HCT116 (cell line): ENCODE measurements at regions of chr3 and their contacts with region 1.

Region 1: DNA sequence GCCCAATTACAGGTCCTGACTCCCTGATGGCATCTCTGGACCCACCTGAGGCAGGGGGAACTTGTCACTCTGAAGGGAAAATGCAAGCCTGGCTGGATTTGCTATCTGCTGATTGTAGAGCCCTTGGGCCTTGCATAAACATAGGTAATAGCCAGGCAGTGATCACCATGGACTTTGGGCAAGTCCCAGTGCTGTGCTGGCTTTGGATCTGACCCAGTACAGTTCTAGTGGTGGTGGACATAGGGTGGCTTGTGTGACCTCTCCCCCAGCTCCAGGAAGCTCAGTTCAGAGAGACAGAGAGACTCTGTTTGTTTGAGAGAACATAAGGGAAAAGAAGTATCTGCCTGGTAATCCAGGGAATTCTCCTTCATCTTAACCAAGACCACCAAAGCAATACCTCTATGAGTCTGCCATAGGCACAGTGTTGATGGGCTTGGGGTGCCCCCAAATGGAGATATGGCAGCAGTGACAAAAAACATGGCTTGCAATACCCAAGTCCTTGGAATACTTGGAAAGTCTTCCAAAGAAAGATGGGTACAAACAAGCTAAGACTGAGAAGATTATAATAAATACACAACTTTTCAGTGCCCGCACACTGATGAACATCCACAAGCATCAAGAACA is 348.5 kb downstream of the PYDC2 start:
- DNase-seq: no peak
- ATAC-seq: no peak
- H3K4me3 ChIP-seq: no peak overlapping the region
- H3K27ac ChIP-seq: no peak overlapping the region
- H3K4me1 ChIP-seq: no peaks in the 10 kb centered on the region
- H3K27me3 ChIP-seq: no peaks in the 10 kb centered on the region
- CTCF ChIP-seq: peak; percentile 11 to 42 (median 27); a peak in 3 of 6 replicates
- POLR2A ChIP-seq: no peak
- RAD21 ChIP-seq: peak; percentile 64

Region 2: DNA sequence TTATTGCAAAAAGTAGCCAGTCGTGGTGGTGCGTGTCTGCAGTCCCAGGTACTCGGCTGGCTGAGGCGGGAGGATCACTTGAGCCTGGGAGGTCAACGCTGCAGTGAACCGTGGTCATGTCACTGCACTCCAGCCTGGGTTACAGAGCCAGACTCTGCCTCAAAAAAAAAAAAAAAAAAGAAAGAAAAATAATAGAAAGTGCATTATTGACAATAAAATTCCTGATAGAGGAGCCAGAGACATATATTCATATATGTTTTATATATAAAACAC is 392.0 kb before region 1 on chr3:
- CTCF ChIA-PET with region 1: interaction called, 6 read pairs
- POLR2A ChIA-PET with region 1: no interaction called
- RAD21 ChIA-PET with region 1: no interaction called
- intact Hi-C with region 1: loop called (anchors 1 kb)
- DNase-seq: no peak
- ATAC-seq: no peak
- H3K4me3 ChIP-seq: no peak overlapping the region
- H3K27ac ChIP-seq: no peak overlapping the region
- H3K4me1 ChIP-seq: no peaks in the 10 kb centered on the region; a peak in 1 of 4 replicates
- H3K27me3 ChIP-seq: no peaks in the 10 kb centered on the region
- CTCF ChIP-seq: no peak
- POLR2A ChIP-seq: no peak
- RAD21 ChIP-seq: no peak

Region 3: DNA sequence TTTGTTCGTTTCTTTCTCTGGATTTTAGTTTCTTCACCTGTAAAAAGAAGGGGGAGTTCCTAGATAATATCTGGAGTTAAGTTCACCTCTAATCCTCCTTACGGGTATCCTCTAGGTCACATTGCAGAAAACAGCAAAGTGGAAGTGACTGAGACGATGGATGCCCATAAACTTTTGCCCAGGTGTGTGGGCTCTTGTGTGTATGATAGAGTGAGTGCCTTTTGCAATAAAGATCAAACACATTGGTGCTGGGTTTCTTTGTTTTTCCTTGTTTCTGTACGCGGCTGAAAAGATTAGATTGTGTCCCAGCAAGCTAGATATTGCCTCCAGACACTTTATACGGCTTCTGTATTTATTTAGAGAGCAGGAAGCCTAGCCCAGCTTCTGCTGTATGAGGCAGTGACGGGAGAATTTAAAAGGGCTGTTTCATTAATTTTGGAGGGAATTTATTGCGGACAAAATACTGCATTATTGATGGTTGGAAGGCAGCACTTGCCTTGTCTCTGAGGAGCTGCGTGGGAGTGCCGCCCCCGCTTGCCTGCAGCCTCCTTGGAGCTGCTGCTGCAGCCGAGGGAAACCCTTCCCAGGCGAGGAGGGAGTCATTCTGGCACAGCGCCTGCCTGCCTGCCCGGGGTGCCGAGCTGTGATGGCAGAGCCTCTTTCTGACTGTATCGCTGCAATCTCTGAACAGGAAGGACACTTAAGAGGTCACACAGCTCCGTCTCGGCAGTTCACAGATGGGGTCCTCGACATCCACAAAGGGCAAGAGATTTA is 309.9 kb before region 1 on chr3:
- CTCF ChIA-PET with region 1: interaction called, 3 read pairs
- POLR2A ChIA-PET with region 1: no interaction called
- RAD21 ChIA-PET with region 1: no interaction called
- intact Hi-C with region 1: loop called (anchors 5 kb)
- DNase-seq: no peak
- ATAC-seq: no peak
- H3K4me3 ChIP-seq: no peak overlapping the region
- H3K27ac ChIP-seq: no peak overlapping the region
- H3K4me1 ChIP-seq: no peaks in the 10 kb centered on the region
- H3K27me3 ChIP-seq: no peaks in the 10 kb centered on the region
- CTCF ChIP-seq: no peak
- POLR2A ChIP-seq: no peak
- RAD21 ChIP-seq: no peak

Region 4: GRCh38 chr3:191869738-191870415 is 60.4 kb after region 1 on chr3:
- CTCF ChIA-PET with region 1: no interaction called
- POLR2A ChIA-PET with region 1: no interaction called
- RAD21 ChIA-PET with region 1: no interaction called
- intact Hi-C with region 1: no loop called
- DNase-seq: no peak
- ATAC-seq: no peak
- H3K4me3 ChIP-seq: no peak overlapping the region
- H3K27ac ChIP-seq: no peak overlapping the region
- H3K4me1 ChIP-seq: no peaks in the 10 kb centered on the region
- H3K27me3 ChIP-seq: no peaks in the 10 kb centered on the region
- CTCF ChIP-seq: no peak
- POLR2A ChIP-seq: no peak
- RAD21 ChIP-seq: no peak